Sigmoid colon (tissue), 7 donors: ENCODE measurements at regions of chr14 and their contacts with region 1.

Region 1: DNA sequence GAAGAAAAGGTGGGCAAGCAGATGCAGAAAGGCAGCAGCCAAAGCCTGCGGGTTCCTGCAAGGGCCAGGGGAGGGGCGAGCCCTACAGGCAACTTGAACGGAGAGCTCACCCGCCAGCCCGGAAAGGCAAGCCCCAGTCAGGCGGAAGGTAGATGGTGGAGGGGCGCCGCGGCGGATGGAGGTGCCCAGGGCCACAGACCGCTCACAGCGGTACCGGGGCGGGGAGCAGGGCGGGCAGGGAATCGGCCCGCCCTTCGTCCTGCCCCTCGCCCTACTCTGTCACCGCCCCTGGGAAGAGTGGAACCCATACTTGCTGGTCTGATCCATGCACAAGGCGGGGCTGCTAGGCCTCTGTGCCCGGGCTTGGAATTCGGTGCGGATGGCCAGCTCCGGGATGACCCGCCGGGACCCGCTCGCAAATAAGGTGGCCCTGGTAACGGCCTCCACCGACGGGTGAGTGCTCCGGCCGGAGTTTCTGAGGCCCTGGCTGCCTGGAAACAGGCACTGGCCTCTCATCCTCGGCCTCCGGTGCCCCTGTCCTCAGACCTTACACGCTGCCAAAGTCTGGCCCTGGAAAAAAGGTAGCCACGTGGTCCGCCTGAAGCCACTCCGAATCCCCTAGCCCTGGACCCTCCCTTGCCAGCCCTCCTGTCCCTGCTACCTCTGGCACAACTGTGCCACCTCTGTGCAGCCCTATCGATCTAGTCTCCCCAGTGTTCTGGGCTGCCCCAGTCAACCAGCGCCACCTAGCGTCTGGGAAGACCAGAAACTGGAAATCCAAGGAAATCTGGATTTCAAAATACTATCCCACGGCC is at the start of gene DHRS4:
- DNase-seq: peak; percentile 90
- H3K4me3 ChIP-seq: peak within 1 kb of the TSS; percentile 55 to 78 (median 68)
- H3K27ac ChIP-seq: peak within 1 kb of the TSS; percentile 81 to 93 (median 86)
- H3K4me1 ChIP-seq: peaks cover 0 to 30% (median 28%) of the 10 kb centered on the region in 4 donors
- H3K27me3 ChIP-seq: no peaks in the 10 kb centered on the region
- CTCF ChIP-seq: peak; percentile 78 to 88 (median 86)
- EP300 ChIP-seq: no peak
- POLR2A ChIP-seq: peak in 1 of 2 donors; percentile 45
- total RNA-seq, gene DHRS4: 23.8 to 52.4 (median 37.8) TPM

Region 2: DNA sequence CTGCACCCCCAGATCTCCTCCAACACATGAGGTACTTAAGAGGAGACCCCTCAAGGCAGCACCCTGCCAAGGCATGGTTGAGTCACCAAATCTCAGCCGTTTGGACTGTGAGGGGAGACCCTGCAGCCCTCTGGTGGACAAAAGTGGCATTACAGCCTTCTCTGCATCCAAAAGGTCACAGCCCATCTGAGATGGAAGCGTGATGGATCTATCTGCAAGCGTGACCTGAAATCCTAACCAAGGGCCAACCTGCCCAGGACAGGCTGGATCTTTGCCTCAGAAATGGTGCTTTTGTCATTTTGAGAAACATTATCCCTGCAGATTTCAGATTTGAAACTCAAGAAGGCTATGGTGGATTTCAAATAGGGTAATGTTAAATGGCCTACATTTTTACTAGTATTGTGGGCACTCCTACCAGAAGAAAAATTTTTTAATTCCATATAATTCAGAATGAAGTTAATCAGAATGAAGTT is 23.8 kb before region 1 on chr14:
- intact Hi-C with region 1: loop called (anchors 2 kb)
- DNase-seq: peak; percentile 85
- H3K4me3 ChIP-seq: no peak overlapping the region
- H3K27ac ChIP-seq: peak overlapping the region in 2 of 4 donors; percentile 43 to 47
- H3K4me1 ChIP-seq: peaks cover 0 to 31% (median 22%) of the 10 kb centered on the region in 4 donors
- H3K27me3 ChIP-seq: no peaks in the 10 kb centered on the region
- CTCF ChIP-seq: peak; percentile 40 to 89 (median 64)
- EP300 ChIP-seq: no peak
- POLR2A ChIP-seq: no peak

Region 3: GRCh38 chr14:23984891-23985602 is 31.4 kb after region 1 on chr14:
- intact Hi-C with region 1: no loop called
- DNase-seq: no peak
- H3K4me3 ChIP-seq: no peak overlapping the region
- H3K27ac ChIP-seq: peak overlapping the region in 1 of 4 donors; percentile 64
- H3K4me1 ChIP-seq: peaks cover 0 to 13% (median 4%) of the 10 kb centered on the region in 4 donors
- H3K27me3 ChIP-seq: no peaks in the 10 kb centered on the region
- CTCF ChIP-seq: no peak
- EP300 ChIP-seq: no peak
- POLR2A ChIP-seq: no peak